Activated naive CD8-positive, alpha-beta T cell treated with anti-CD3 and anti-CD28 coated beads, Interleukin-2, amount 10 ng/mL, durations not matched to agents 7 days and 5 days (primary cell): ENCODE measurements at regions of chr1 and their contacts with region 1.

Region 1: DNA sequence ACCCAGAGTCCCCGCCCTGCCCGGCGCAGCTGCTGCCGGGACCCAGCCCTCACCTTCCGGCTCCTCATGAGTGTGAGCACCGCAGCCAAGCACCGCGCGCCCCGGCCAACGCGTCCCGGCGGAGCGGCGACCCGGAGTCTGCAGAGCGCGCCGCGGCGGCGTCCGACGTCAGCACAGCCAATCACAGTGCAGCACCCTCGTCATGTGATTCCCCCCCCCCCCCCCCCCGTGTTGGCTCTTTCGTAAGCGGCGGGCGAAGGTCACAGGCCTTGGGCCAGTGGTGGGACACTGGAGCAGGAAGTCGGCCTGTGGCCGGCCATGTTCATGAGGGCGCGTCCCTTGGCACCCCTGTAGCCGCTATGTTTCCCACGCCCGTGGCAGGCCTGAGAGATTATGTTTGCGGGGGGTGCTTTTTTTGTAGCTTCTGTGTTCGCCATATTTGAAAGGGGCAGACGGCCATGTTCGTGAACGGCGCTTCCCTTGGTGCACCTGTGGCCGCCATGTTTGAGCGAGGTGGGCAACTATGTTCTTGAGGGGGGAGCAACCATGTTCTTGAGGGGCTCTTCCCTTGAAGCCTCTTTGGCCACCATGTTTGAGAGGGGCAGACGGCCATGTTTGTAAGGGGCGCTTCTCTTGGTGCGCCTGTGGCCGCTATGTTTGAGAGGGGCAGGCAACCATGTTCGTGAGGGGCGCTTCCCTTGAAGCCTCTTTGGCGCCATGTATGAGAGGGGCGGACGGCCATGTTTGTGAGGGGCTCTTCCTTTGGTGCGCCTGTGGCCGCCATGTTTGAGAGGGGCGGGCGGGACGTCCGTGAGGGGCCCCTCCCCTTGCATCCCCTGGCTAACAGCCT is at the start of gene C1orf174:
- DNase-seq: peak; percentile 89
- ATAC-seq: peak; percentile 82
- H3K4me3 Mint-ChIP-seq: peak within 1 kb of the TSS; percentile 97
- H3K27ac Mint-ChIP-seq: peak within 1 kb of the TSS; percentile 93
- H3K4me1 Mint-ChIP-seq: peaks cover 45% of the 10 kb centered on the region
- H3K27me3 Mint-ChIP-seq: no peaks in the 10 kb centered on the region
- total RNA-seq, gene C1orf174: 31.1 to 34.4 TPM

Region 2: DNA sequence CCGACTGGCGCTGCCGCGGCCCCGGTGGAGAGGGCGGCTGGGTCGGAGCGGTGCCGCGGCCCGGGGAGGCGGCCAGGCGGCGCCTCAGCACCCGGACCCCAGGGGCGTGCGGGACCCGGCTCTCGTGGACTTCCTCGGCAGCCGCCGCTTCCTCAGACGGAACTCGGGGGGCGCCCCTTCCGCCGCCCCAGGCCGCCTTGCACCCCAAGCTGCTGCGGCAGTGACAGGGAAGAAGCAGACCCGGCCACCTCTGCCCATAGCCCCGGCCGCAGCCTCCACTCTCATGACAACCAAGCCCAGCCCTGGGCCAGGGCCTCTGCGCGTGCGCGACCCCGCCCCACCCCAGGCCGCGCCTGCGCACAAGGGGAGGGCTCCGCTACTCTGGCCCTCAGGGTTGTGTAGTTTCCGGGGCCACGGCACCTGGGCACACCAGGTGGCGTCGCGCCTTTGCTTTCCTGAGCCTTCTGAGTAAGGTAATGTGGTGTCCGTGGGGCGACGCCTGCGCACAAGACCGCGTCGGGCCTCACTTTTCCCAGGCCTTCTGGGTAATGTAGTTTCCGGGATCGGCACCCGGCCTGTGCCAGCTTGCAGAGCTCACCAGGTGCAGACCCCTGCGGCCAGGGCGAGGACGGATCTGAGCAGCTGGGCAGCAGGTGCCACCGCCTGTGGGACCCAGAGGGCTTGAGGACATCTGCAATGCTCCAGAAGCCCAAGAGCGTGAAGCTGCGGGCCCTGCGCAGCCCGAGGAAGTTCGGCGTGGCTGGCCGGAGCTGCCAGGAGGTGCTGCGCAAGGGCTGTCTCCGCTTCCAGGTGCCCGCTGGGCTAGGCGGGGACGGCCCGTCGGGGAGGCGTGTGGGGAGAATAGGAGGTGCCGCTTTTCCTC is 43.2 kb before region 1 on chr1 and contains the starts of genes CEP104 and DFFB:
- POLR2A ChIA-PET with region 1: interaction called, 64 read pairs
- DNase-seq: peak; percentile 98
- ATAC-seq: peak; percentile 99
- H3K4me3 Mint-ChIP-seq: peak within 1 kb of the TSS; percentile 98
- H3K27ac Mint-ChIP-seq: peak within 1 kb of the TSS; percentile 98
- H3K4me1 Mint-ChIP-seq: peaks cover 26% of the 10 kb centered on the region
- H3K27me3 Mint-ChIP-seq: no peaks in the 10 kb centered on the region
- total RNA-seq, gene CEP104: 44.6 to 46.9 TPM
- total RNA-seq, gene DFFB: 14.3 to 15.8 TPM